ENCODE measurements at regions of chr16 and their contacts with region 1.

Region 1: GRCh38 chr16:4402439-4403132 is 13.8 kb downstream of the CORO7 start:
- DNase-seq: peak; percentile 96
- H3K4me3 ChIP-seq: peak overlapping the region in 1 of 2 experiments; percentile 50; a peak in 1 of 4 replicates
- H3K27ac ChIP-seq: no peak overlapping the region; a peak in 1 of 4 replicates
- H3K4me1 ChIP-seq: peaks cover 0 to 11% of the 10 kb centered on the region in 2 experiments; a peak in 1 of 4 replicates
- H3K27me3 ChIP-seq: no peaks in the 10 kb centered on the region
- CTCF ChIP-seq: peak; percentile 93
- EP300 ChIP-seq: no peak
- RAD21 ChIP-seq: peak; percentile 93

Region 2: DNA sequence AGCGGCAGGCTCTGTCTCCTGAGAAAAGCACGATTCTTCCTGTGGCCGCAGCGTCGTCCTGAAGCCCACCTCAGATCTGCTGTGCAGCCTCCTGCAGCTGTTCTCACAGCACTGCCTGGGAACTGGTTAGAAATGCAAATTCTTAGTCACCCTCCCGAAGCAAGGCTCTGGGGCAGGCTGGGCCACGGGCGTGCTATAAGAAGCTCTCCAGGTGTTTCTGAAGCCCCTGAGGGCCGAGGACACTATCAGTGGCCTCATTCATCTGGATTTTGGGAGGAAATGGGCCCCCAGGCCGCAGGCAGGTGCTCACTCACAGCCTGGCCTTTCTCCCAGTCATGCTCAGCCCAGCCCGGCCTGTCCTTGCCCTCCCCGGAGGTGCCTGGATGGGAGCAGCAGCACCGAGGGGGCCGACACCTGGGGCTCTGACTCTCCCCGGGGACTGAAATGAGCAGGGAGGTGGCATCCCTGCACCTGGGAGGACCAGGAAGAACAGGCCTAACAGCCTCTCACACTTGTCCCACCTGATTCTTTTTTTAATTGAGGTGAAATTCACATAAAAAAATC is 815.0 kb before region 1 on chr16:
- CTCF ChIA-PET with region 1: no interaction called
- POLR2A ChIA-PET with region 1: no interaction called
- DNase-seq: no peak
- H3K4me3 ChIP-seq: no peak overlapping the region
- H3K27ac ChIP-seq: no peak overlapping the region
- H3K4me1 ChIP-seq: no peaks in the 10 kb centered on the region
- H3K27me3 ChIP-seq: no peaks in the 10 kb centered on the region
- CTCF ChIP-seq: no peak
- EP300 ChIP-seq: no peak
- RAD21 ChIP-seq: no peak

Region 3: DNA sequence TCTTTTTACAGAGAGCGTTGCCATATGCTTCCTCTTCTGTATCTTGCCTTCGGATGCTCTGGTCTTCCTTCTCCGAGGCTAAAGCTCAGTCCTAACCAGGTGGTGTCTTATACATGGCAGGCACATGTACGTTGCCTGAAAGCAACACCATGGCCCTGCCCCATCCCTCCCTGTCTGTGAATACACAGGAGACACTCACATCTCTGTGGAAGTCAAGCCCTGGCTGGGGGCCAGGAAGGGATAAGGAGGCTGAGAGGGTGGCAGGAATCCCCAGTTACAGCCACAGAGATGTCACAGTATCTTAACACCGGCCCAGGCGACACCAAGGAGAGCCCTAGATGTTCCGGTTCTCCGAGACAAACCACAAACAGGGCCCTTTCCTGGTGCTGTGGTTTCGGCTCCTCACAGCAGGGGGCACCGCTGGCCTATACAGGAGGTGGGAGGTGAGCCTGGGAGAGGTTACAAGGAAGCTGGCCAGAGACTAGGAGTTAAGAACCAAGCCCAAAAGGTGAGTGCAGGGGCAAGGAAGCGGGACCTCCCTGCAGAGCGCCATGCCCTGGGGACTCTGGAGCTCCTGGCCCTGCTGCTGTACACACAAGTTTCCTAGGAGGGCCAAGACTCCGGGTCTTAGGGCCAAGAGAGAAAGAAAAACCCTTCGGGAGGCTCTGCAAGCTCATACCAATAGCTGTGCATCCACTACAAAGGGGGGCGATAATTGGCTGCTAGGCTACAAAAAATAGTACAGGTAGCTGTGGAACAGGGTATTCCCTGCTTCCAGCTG is 202.4 kb before region 1 on chr16:
- CTCF ChIA-PET with region 1: interaction called, 19 read pairs
- POLR2A ChIA-PET with region 1: no interaction called
- DNase-seq: peak; percentile 86
- H3K4me3 ChIP-seq: no peak overlapping the region
- H3K27ac ChIP-seq: no peak overlapping the region
- H3K4me1 ChIP-seq: peaks cover 2 to 4% of the 10 kb centered on the region in 2 experiments; a peak in 1 of 4 replicates
- H3K27me3 ChIP-seq: no peaks in the 10 kb centered on the region
- CTCF ChIP-seq: peak; percentile 82
- EP300 ChIP-seq: no peak
- RAD21 ChIP-seq: peak; percentile 90

Region 4: GRCh38 chr16:4271176-4272066 is 131.2 kb before region 1 on chr16:
- CTCF ChIA-PET with region 1: interaction called, 26 read pairs
- POLR2A ChIA-PET with region 1: no interaction called
- DNase-seq: peak; percentile 90
- H3K4me3 ChIP-seq: peak overlapping the region; percentile 65 to 84
- H3K27ac ChIP-seq: peak overlapping the region; percentile 79 to 91
- H3K4me1 ChIP-seq: peaks cover 0 to 12% of the 10 kb centered on the region in 2 experiments; a peak in 1 of 4 replicates
- H3K27me3 ChIP-seq: no peaks in the 10 kb centered on the region
- CTCF ChIP-seq: no peak
- EP300 ChIP-seq: no peak
- RAD21 ChIP-seq: no peak

Region 5: DNA sequence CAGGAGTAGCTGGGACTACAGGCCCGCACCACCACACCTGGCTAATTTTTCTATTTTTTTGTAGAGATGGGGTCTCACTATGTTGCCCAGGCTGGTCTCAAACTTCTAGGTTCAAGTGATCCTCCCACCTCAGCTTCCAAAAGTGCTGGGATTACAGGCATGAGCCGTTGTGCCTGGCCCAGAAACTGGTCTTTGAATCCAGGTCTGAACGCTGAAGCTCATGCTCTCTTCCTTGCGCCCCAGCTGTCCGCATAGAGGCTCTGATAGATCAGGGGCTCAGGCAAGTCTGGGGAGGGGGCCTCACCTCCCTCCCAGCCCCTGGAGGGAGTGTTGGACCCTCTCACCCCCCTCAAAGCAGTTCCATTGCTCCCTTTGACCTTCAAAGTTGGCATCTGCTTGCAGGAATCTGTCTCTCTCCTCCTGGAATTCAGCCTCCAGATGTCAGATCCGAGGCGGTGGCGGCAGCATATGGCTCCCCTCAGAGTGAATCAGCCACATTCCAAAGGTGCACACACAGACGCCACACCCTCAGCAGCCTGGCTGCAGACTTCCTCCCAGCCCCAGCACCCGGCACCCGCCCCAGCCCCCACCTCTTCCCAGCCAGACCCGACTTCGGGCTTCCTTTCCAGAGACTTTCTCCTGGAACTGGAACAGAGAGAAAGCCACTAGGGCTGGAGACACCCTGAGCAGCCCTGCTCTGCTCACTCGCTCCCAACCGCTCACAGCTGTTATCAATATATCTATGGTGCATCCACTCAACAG is 103.6 kb before region 1 on chr16:
- CTCF ChIA-PET with region 1: interaction called, 13 read pairs
- POLR2A ChIA-PET with region 1: no interaction called
- DNase-seq: peak; percentile 53
- H3K4me3 ChIP-seq: 0 out of 4 replicates have a peak overlapping the region, but pooled peaks of 1 of the 2 experiments have one; percentile 11
- H3K27ac ChIP-seq: peak overlapping the region; percentile 65 to 86; a peak in 3 of 4 replicates
- H3K4me1 ChIP-seq: peaks cover 9 to 16% of the 10 kb centered on the region in 2 experiments; a peak in 3 of 4 replicates
- H3K27me3 ChIP-seq: no peaks in the 10 kb centered on the region
- CTCF ChIP-seq: no peak
- EP300 ChIP-seq: peak in 1 of 2 experiments; percentile 61; a peak in 1 of 4 replicates
- RAD21 ChIP-seq: no peak

Region 6: DNA sequence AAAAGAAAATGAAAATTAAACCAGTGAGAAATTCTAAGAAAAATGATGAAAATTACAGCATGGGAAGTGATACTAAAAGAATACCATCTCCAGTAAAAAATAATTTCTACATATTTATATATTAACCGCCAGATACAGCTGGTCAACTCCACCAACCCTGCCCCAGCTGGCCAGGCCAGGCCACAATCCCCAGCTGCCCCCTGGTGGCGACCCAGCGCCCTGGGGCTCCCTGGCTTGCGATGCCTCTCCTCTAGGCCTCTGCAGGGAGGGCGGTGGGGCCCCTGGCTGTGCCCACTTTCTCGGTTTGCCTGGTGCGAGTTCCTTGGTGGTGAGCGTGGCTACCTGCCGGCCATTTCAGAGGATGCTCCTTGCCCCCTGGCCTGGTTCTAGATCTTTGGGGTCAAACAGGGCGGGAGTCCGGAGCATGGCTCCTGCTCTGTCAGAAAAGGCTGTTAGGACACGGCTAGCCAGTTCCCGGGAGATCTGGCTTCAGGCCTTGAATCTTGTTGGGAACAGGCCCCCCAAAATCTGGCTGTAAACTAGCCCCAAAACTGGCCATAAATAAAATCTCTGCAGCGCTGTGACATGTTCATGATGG is 72.2 kb before region 1 on chr16:
- CTCF ChIA-PET with region 1: interaction called, 153 read pairs
- POLR2A ChIA-PET with region 1: no interaction called
- DNase-seq: peak; percentile 94
- H3K4me3 ChIP-seq: no peak overlapping the region
- H3K27ac ChIP-seq: no peak overlapping the region
- H3K4me1 ChIP-seq: peaks cover 15 to 21% of the 10 kb centered on the region in 2 experiments; a peak in 3 of 4 replicates
- H3K27me3 ChIP-seq: no peaks in the 10 kb centered on the region
- CTCF ChIP-seq: peak; percentile 96
- EP300 ChIP-seq: no peak
- RAD21 ChIP-seq: peak; percentile 93

Region 7: GRCh38 chr16:4350787-4351659 is 51.6 kb before region 1 on chr16 and contains the start of gene PAM16:
- CTCF ChIA-PET with region 1: interaction called, 205 read pairs
- POLR2A ChIA-PET with region 1: interaction called, 4 read pairs
- DNase-seq: peak; percentile 99
- H3K4me3 ChIP-seq: peak within 1 kb of the TSS; percentile 67 to 85
- H3K27ac ChIP-seq: peak within 1 kb of the TSS; percentile 59 to 83
- H3K4me1 ChIP-seq: peaks cover 3 to 10% of the 10 kb centered on the region in 2 experiments; a peak in 3 of 4 replicates
- H3K27me3 ChIP-seq: no peaks in the 10 kb centered on the region
- CTCF ChIP-seq: 0 out of 2 replicates have a peak, but pooled peaks have one; percentile 20
- EP300 ChIP-seq: no peak
- RAD21 ChIP-seq: no peak
- polyA plus RNA-seq, gene PAM16: 96.3 and 96.4 TPM in 2 replicates

Region 8: GRCh38 chr16:4371357-4372000 is 31.1 kb before region 1 on chr16 and contains the start of gene VASN:
- CTCF ChIA-PET with region 1: interaction called, 558 read pairs
- POLR2A ChIA-PET with region 1: interaction called, 3 read pairs
- DNase-seq: peak; percentile 98
- H3K4me3 ChIP-seq: peak within 1 kb of the TSS; percentile 77 to 92
- H3K27ac ChIP-seq: peak within 1 kb of the TSS; percentile 83 to 88
- H3K4me1 ChIP-seq: peaks cover 40 to 80% of the 10 kb centered on the region in 2 experiments
- H3K27me3 ChIP-seq: no peaks in the 10 kb centered on the region
- CTCF ChIP-seq: no peak
- EP300 ChIP-seq: peak in 1 of 2 experiments; percentile 51; a peak in 2 of 4 replicates
- RAD21 ChIP-seq: no peak
- polyA plus RNA-seq, gene VASN: 11.4 and 37.4 TPM in 2 replicates

Region 9: DNA sequence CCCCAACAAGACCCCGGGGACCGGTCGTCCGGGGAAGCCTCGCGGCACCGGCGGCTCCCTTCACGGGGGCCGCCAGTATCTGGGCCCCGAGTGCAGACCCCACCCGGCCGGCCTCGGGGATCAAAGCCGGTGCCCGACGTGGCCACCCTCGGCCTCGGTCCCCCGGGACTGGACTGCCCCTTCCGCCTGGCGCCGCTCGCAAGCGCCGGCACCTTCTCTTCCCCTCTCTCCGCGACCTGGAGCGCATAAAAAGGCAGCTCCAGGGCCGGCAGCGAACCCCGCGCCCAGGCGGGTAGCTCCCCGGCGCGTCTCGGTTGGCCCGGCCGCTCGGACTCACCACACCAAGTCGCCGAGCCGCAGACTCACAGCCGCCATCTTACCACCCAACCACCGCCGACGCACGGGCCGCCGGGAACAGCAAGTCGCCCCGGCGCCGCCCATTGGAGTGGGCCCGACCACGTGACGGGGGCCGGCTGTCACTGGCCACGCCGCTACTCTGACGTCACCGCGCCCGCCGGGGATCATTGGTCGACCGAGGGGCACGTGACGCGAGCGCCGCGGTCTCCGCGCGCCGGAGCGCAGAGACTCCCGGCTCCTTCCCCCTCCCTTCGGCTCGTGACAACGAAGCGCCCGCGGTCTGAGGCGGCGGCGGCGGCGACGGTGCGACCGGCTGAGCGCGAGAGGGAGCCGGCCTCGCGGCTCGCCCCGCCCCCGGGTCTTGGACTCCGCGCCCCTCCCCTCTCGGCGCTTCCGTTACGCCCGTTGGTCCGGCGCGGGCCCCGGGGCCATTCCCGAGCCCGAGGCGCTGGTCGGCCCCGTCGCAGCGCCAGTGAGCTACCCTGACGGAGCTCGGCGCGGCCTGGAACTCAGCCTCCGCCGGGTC is 444.5 kb after region 1 on chr16 and contains the starts of genes GLYR1 and UBN1:
- CTCF ChIA-PET with region 1: no interaction called
- POLR2A ChIA-PET with region 1: no interaction called
- DNase-seq: peak; percentile 99
- H3K4me3 ChIP-seq: peak within 1 kb of the TSS; percentile 81 to 89
- H3K27ac ChIP-seq: peak within 1 kb of the TSS; percentile 77 to 84
- H3K4me1 ChIP-seq: peaks cover 12 to 26% of the 10 kb centered on the region in 2 experiments; a peak in 3 of 4 replicates
- H3K27me3 ChIP-seq: no peaks in the 10 kb centered on the region
- CTCF ChIP-seq: no peak
- EP300 ChIP-seq: no peak
- RAD21 ChIP-seq: no peak
- polyA plus RNA-seq, gene GLYR1: 40.1 and 45.2 TPM in 2 replicates
- polyA plus RNA-seq, gene UBN1: 9.7 and 10.9 TPM in 2 replicates